ENCODE measurements at regions of chr19 and their contacts with region 1.

Region 1: GRCh38 chr19:4217429-4218264 is 11.7 kb upstream of the EBI3 start:
- DNase-seq: no peak
- ATAC-seq: no peak
- H3K4me3 ChIP-seq: no peak overlapping the region
- H3K27ac ChIP-seq: no peak overlapping the region
- H3K4me1 ChIP-seq: peaks cover 9% of the 10 kb centered on the region; the same call in 1 of the 3 replicates
- CTCF ChIP-seq: no peak
- EP300 ChIP-seq: no peak
- POLR2A ChIP-seq: no peak
- RAD21 ChIP-seq: no peak

Region 2: GRCh38 chr19:4232958-4233853 is 15.6 kb after region 1 on chr19:
- CTCF ChIA-PET with region 1: interaction called, 22 read pairs
- POLR2A ChIA-PET with region 1: no interaction called
- DNase-seq: peak in 1 of 2 experiments; percentile 49
- ATAC-seq: peak; percentile 58 to 80
- H3K4me3 ChIP-seq: no peak overlapping the region
- H3K27ac ChIP-seq: peak overlapping the region in 1 of 2 experiments; percentile 68; a peak in 3 of 6 replicates
- H3K4me1 ChIP-seq: peaks cover 14% of the 10 kb centered on the region
- CTCF ChIP-seq: peak; percentile 56
- EP300 ChIP-seq: no peak
- POLR2A ChIP-seq: no peak
- RAD21 ChIP-seq: no peak

Measured in A549 (cell line).